ENCODE measurements at regions of chr2 and their contacts with region 1.

Region 1: GRCh38 chr2:202634556-202635427 is at the start of gene FAM117B:
- DNase-seq: peak; percentile 99
- ATAC-seq: peak; percentile 88
- H3K4me3 Mint-ChIP-seq: peak within 1 kb of the TSS; percentile 83
- H3K27ac Mint-ChIP-seq: peak within 1 kb of the TSS; percentile 93
- H3K4me1 Mint-ChIP-seq: peaks cover 48% of the 10 kb centered on the region
- H3K27me3 Mint-ChIP-seq: no peaks in the 10 kb centered on the region
- total RNA-seq, gene FAM117B: 15.3 to 16.6 TPM

Region 2: GRCh38 chr2:201451292-201452057 is 1183.3 kb before region 1 on chr2 and contains the starts of genes STRADB and TRAK2:
- CTCF ChIA-PET with region 1: no interaction called
- POLR2A ChIA-PET with region 1: no interaction called
- intact Hi-C with region 1: loop called in 1 of 2 experiments (anchors 2 kb)
- DNase-seq: peak; percentile 98
- ATAC-seq: peak; percentile 91
- H3K4me3 Mint-ChIP-seq: peak within 1 kb of the TSS; percentile 95
- H3K27ac Mint-ChIP-seq: peak within 1 kb of the TSS; percentile 97
- H3K4me1 Mint-ChIP-seq: peaks cover 44% of the 10 kb centered on the region
- H3K27me3 Mint-ChIP-seq: no peaks in the 10 kb centered on the region
- total RNA-seq, gene STRADB: 20.5 to 21.8 TPM
- total RNA-seq, gene TRAK2: 22.5 to 25.6 TPM

Region 3: DNA sequence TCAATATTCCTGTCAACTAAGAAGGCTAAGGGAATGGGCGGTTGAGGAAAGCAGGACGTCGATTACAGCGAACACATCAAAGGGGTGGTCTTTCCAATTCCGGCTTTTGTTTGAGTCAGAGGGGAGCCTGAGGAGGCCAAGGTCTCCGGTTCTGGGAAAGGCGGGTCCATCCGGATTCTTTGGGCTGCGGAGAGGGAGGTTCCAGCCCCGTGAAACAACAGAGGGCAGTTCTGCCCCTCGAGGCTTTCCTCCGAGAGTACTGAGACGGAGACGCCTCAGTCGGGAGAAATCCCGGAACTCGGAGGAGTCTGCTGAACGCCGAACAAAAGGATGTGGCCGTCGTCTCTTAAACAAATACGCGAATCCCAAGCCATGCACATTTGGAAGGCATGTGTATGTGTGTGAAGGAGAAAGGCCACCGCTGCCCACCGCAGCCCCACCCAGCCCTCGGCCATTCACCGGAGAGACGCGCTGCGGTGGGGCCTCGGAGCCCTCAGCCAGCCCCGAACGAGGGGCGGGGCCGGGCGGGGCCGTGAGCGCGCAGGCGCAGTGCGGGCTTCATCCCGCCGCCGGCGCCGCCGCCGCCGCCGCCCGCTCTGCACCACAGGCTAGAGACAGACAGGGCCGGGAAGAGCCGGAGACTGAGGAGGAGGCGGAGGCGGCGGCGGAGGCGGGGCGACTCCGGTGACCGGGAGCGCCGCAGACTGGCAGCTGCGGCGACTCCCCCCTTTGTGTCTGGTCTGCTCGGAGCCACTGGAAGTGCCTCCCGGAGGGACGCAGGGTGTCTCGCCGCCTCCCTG is 259.0 kb before region 1 on chr2 and contains the start of gene BMPR2:
- CTCF ChIA-PET with region 1: no interaction called
- POLR2A ChIA-PET with region 1: no interaction called
- intact Hi-C with region 1: loop called in 1 of 2 experiments (anchors 2 kb)
- DNase-seq: peak; percentile 90
- ATAC-seq: peak; percentile 86
- H3K4me3 Mint-ChIP-seq: peak within 1 kb of the TSS; percentile 95
- H3K27ac Mint-ChIP-seq: peak within 1 kb of the TSS; percentile 94
- H3K4me1 Mint-ChIP-seq: peaks cover 23% of the 10 kb centered on the region
- H3K27me3 Mint-ChIP-seq: no peaks in the 10 kb centered on the region
- total RNA-seq, gene BMPR2: 7.6 to 10.8 TPM

Region 4: DNA sequence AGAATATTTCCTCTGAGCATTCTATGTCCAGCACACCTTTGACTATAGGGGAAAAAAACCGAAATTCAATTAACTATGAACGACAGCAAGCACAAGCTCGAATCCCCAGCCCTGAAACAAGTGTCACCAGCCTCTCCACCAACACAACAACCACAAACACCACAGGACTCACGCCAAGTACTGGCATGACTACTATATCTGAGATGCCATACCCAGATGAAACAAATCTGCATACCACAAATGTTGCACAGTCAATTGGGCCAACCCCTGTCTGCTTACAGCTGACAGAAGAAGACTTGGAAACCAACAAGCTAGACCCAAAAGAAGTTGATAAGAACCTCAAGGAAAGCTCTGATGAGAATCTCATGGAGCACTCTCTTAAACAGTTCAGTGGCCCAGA is 79.4 kb before region 1 on chr2:
- CTCF ChIA-PET with region 1: no interaction called
- POLR2A ChIA-PET with region 1: no interaction called
- intact Hi-C with region 1: no loop called
- DNase-seq: peak; percentile 33
- ATAC-seq: no peak
- H3K4me3 Mint-ChIP-seq: no peak overlapping the region
- H3K27ac Mint-ChIP-seq: no peak overlapping the region
- H3K4me1 Mint-ChIP-seq: no peaks in the 10 kb centered on the region
- H3K27me3 Mint-ChIP-seq: no peaks in the 10 kb centered on the region

Region 5: DNA sequence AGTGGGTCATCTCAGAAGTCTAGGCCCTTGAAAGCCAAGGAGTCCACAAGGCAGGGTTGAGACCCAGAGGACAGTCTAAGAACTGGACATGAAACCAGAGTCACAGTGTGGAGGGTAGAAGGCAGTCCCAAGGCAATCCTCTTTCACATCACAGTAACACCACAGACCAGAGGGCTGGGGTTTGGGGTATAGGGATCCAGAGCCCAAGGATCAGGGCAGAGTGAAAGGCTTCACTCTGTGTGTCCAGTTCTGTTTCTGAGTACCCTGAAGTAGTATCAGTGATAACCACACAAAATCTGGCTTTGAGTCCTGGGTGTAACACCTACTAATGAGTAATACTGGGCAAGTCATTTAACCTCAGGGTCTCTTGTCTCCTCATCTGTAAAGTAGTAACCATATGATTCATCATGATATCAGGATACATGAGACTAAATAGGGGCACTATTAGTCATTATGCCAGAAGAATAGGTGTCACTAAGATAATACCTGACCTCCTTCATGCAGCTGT is 145.8 kb after region 1 on chr2:
- CTCF ChIA-PET with region 1: no interaction called
- POLR2A ChIA-PET with region 1: no interaction called
- intact Hi-C with region 1: loop called in 1 of 2 experiments (anchors 1 kb)
- DNase-seq: no peak
- ATAC-seq: peak; percentile 97
- H3K4me3 Mint-ChIP-seq: no peak overlapping the region
- H3K27ac Mint-ChIP-seq: peak overlapping the region; percentile 55
- H3K4me1 Mint-ChIP-seq: peaks cover 13% of the 10 kb centered on the region
- H3K27me3 Mint-ChIP-seq: no peaks in the 10 kb centered on the region

Region 6: DNA sequence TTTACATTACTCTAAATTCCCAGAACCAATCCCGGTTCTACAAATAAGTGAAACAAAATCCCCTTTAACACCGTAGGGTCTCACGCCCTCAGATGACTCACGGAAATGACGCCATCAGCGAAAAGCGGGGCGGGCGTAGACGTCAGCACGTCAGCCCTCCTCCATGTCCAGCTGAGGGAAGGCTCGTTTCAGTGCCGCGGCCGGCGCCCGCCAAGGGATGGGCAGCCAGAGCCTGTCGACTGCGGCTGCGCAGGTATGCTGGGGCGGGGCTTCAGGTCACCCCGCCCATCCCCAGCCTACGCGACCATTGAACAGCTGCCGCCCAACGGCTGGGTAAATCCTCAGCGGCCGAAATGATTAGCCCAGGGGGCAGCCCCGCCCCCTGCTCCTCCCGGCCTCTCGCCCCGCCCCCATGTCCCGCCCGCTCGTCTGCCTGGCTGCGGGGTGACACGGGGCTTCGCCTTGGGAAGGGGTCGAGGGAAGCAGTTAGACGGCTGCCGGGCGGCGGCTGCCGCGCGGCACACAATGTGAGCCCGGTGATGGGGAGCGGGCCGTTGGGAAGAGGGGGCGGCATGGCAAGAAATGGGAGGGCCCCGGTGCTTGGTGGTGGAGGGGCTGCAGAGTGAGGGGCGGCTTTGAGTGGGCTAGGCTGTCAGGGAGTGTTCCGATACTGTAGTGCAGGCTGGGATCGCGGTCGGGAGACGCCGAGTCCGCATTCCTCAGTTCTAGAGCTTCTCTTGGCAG is 379.8 kb after region 1 on chr2 and contains the start of gene NBEAL1:
- CTCF ChIA-PET with region 1: no interaction called
- POLR2A ChIA-PET with region 1: no interaction called
- intact Hi-C with region 1: loop called (anchors 1 to 2 kb)
- DNase-seq: peak; percentile 98
- ATAC-seq: peak; percentile 96
- H3K4me3 Mint-ChIP-seq: peak within 1 kb of the TSS; percentile 93
- H3K27ac Mint-ChIP-seq: peak within 1 kb of the TSS; percentile 89
- H3K4me1 Mint-ChIP-seq: peaks cover 32% of the 10 kb centered on the region
- H3K27me3 Mint-ChIP-seq: no peaks in the 10 kb centered on the region
- total RNA-seq, gene NBEAL1: 8.2 to 13.0 TPM

Region 7: DNA sequence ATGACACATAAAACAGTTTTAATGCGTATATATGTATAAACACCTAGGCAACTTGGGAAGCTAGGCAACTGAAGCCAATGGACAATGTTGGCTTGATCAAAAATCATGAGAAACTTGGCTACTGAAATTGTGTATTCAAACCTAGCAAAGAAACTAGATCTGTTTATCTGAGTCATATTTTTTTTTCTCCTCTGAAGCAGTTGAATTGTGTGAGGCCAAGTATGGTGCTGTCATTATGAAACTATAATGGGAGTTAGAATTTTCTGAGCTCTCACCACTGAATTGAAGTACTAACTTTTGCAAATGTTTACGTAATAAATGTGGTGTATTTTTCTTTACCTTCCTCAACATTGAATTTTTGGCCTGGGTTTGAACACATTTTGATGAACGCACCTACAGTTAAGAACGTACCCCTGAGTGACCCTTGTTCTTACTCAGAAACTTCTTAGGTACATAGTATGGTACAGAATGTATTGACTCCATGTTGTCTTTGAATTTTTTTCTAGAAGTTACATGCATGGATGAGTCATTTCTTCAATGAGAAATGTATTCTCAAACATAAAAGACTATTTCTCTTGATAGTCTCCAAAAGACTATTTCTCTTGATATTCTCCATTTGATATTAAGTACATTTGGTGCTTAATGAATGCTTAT is 1095.4 kb after region 1 on chr2:
- CTCF ChIA-PET with region 1: no interaction called
- POLR2A ChIA-PET with region 1: no interaction called
- intact Hi-C with region 1: loop called in 1 of 2 experiments (anchors 5 kb)
- DNase-seq: no peak
- ATAC-seq: peak; percentile 50
- H3K4me3 Mint-ChIP-seq: peak overlapping the region; percentile 46
- H3K27ac Mint-ChIP-seq: peak overlapping the region; percentile 99
- H3K4me1 Mint-ChIP-seq: peaks cover 93% of the 10 kb centered on the region
- H3K27me3 Mint-ChIP-seq: no peaks in the 10 kb centered on the region